Left cardiac atrium (tissue), 4 donors: ENCODE measurements at regions of chr18 and their contacts with region 1.

Region 1: GRCh38 chr18:79246348-79247108 is 149.2 kb upstream of the NFATC1 start:
- DNase-seq: peak; percentile 67
- ATAC-seq: peak; percentile 99

Region 2: GRCh38 chr18:78875268-78875997 is 371.1 kb before region 1 on chr18:
- intact Hi-C with region 1: loop called (anchors 5 to 10 kb)
- DNase-seq: no peak
- ATAC-seq: peak in 1 of 2 donors; percentile 45

Region 3: DNA sequence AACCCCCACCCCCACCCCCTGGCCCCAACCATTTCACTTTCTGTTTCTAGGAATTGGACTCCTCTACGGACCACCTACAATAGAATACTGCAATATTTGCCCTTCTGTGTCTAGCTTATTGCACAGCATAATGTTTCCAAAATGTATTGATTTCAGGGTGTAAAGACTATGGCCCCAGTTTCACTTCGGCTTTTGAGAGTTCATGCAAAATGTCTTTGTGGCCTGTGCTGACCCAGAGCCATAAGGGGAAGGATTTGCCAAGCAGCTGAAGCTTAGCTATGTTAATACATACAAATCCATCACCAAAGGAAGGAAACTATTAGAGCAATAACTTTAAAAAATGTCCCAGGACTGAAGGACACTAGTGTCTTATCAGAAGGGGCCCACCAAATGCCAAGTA is 188.5 kb before region 1 on chr18:
- intact Hi-C with region 1: no loop called
- DNase-seq: no peak
- ATAC-seq: no peak